ENCODE measurements at regions of chr2 and their contacts with region 1.

Region 1: GRCh38 chr2:98649135-98649991 is 41.0 kb downstream of the UNC50 start:
- DNase-seq: peak; percentile 14
- H3K4me3 ChIP-seq: no peak overlapping the region
- H3K27me3 ChIP-seq: 0 out of 2 replicates have a peak, but pooled peaks cover 2% of the 10 kb centered on the region
- CTCF ChIP-seq: peak; percentile 100

Region 2: GRCh38 chr2:98835831-98836385 is 186.5 kb after region 1 on chr2:
- CTCF ChIA-PET with region 1: interaction called, 25 read pairs
- POLR2A ChIA-PET with region 1: no interaction called
- DNase-seq: no peak
- H3K4me3 ChIP-seq: no peak overlapping the region
- H3K27me3 ChIP-seq: peaks cover 1% of the 10 kb centered on the region; the same call in 1 of the 2 replicates
- CTCF ChIP-seq: no peak

Region 3: DNA sequence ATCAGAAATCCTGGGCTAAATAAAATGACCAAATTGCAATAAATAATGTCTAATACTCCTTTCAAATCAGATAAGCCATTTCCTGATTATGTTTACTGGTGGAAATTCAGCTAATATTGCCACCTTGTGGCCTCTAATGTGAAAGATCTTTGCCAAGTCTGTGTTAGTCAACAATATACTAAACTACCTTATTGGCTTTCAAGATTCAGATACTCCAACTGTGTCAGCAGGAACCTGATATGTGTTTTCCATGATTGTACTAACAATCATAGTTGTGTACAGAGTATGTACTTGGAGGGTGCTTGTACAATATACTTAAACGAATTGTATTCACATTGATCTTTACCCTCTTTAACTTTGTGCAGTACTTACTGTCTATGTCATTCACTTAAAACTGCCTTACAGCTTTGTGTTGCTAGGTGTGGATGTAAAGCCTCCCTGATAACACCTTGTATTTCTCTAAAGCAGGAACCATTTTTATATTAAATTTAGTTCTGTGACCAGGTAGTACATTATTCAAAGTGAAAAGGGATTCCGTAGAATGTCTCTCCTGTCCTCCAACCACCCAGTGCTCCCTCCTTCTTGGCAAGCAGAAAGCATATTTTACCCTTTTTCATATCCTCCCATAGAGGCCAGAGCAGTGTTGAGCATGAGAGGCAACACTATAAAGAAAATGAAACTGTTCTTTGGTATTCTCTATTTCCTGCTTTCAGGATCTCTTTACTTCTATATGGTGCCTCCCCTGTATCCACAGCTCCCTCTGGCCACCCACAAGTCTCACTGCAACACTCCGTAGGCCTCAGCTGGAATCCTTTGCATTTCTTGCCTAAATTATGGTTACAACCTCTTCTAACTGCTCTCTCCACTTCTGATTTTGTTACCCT is 417.0 kb after region 1 on chr2:
- CTCF ChIA-PET with region 1: interaction called, 47 read pairs
- POLR2A ChIA-PET with region 1: no interaction called
- DNase-seq: no peak
- H3K4me3 ChIP-seq: no peak overlapping the region
- H3K27me3 ChIP-seq: no peaks in the 10 kb centered on the region
- CTCF ChIP-seq: peak; percentile 61